ENCODE measurements at regions of chr2 and their contacts with region 1.

Region 1: GRCh38 chr2:171529914-171530313 is 7.6 kb downstream of the CYBRD1 start:
- DNase-seq: no peak
- ATAC-seq: no peak
- H3K4me3 ChIP-seq: no peak overlapping the region
- H3K4me3 Mint-ChIP-seq: no peak overlapping the region
- H3K27ac ChIP-seq: no peak overlapping the region
- H3K27ac Mint-ChIP-seq: no peak overlapping the region
- H3K4me1 ChIP-seq: no peaks in the 10 kb centered on the region
- H3K4me1 Mint-ChIP-seq: no peaks in the 10 kb centered on the region
- H3K27me3 ChIP-seq: peaks cover 0 to 8% of the 10 kb centered on the region in 2 experiments
- H3K27me3 Mint-ChIP-seq: peaks cover 26 to 33% of the 10 kb centered on the region in 2 donors

Region 2: DNA sequence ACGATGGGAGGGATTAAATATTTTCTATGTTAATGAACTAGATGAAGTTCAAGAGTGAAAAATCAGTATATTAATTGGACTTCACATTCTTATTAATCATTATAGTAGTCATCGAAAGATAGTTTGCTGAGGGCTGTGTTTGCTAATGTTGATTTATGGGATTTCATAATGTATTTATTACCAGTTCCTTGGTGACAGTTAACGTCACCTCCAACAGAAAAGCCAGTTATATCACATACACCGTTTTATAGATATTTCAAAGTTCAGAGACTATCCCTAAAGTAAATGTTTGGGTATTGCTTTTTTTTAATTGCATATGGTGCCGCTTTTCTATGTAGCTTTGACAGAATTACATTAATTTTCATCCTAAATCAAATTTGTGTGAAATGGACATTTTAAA is 864.2 kb before region 1 on chr2:
- CTCF ChIA-PET with region 1: interaction called in 1 of 2 experiments, 10 read pairs
- POLR2A ChIA-PET with region 1: no interaction called
- DNase-seq: no peak
- ATAC-seq: no peak
- H3K4me3 ChIP-seq: no peak overlapping the region
- H3K4me3 Mint-ChIP-seq: no peak overlapping the region
- H3K27ac ChIP-seq: no peak overlapping the region
- H3K27ac Mint-ChIP-seq: no peak overlapping the region
- H3K4me1 ChIP-seq: no peaks in the 10 kb centered on the region
- H3K4me1 Mint-ChIP-seq: no peaks in the 10 kb centered on the region
- H3K27me3 ChIP-seq: peaks cover 0 to 2% of the 10 kb centered on the region in 2 experiments
- H3K27me3 Mint-ChIP-seq: peaks cover 10 to 18% of the 10 kb centered on the region in 2 donors

Region 3: GRCh38 chr2:171479154-171479814 is 50.6 kb before region 1 on chr2:
- CTCF ChIA-PET with region 1: no interaction called
- POLR2A ChIA-PET with region 1: no interaction called
- DNase-seq: no peak
- ATAC-seq: no peak
- H3K4me3 ChIP-seq: no peak overlapping the region
- H3K4me3 Mint-ChIP-seq: no peak overlapping the region
- H3K27ac ChIP-seq: no peak overlapping the region
- H3K27ac Mint-ChIP-seq: no peak overlapping the region
- H3K4me1 ChIP-seq: no peaks in the 10 kb centered on the region
- H3K4me1 Mint-ChIP-seq: peaks cover 0 to 11% (median 6%) of the 10 kb centered on the region in 3 donors
- H3K27me3 ChIP-seq: no peaks in the 10 kb centered on the region
- H3K27me3 Mint-ChIP-seq: no peaks in the 10 kb centered on the region

Region 4: GRCh38 chr2:171547720-171548119 is 17.8 kb after region 1 on chr2:
- CTCF ChIA-PET with region 1: interaction called, 5 to 15 read pairs
- POLR2A ChIA-PET with region 1: no interaction called
- DNase-seq: no peak
- ATAC-seq: no peak
- H3K4me3 ChIP-seq: no peak overlapping the region
- H3K4me3 Mint-ChIP-seq: no peak overlapping the region
- H3K27ac ChIP-seq: no peak overlapping the region
- H3K27ac Mint-ChIP-seq: no peak overlapping the region
- H3K4me1 ChIP-seq: no peaks in the 10 kb centered on the region
- H3K4me1 Mint-ChIP-seq: no peaks in the 10 kb centered on the region
- H3K27me3 ChIP-seq: peaks cover 0 to 3% of the 10 kb centered on the region in 2 experiments
- H3K27me3 Mint-ChIP-seq: peaks cover 5 to 13% of the 10 kb centered on the region in 2 donors